MCF 10A (cell line): ENCODE measurements at regions of chr13 and their contacts with region 1.

Region 1: DNA sequence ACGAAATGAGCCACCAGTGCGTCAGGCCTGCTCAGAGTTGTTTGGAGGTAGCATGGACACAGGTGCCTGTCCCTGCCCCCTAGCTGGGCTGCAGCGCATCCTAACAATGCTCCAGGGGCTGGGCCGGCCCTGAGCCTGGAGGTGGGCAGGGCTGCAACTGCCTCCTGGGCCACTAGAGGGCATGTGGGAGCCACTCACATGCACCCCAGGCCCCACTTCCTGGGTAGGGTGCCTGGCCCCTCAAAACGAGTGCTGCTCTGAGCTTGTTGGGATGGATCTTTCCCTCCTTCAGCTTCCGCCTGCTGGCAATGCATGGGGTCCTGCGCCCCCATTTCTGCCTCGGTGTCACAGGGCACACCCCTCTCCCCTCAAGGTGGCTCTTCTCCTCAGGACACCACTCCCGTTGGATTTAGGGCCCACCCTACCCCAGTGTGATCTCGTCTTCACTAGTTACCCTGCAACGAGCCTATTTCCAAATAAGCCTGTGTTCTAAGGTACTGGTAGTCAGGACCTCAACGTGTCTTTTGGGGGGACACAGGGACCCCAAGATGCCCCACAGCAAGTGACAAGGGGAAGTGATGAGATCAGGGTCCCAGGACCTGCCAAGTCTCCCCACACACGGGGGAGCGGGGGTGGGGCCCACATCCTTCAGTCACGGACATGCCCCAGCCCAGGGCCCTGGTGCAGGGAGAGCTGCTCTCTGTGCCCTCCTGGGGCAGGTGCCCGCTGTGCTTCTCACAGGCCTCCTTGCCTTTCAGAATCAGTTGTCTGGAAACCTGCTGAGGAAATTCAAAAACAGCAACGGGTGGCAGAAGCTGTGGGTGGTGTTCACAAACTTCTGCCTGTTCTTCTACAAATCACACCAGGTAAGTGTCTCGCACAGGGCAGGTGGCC is 131.3 kb downstream of the STK24 start:
- DNase-seq: peak; percentile 75
- H3K4me3 Mint-ChIP-seq: no peak overlapping the region
- H3K27ac Mint-ChIP-seq: no peak overlapping the region
- H3K4me1 Mint-ChIP-seq: peaks cover 19% of the 10 kb centered on the region
- H3K27me3 Mint-ChIP-seq: no peaks in the 10 kb centered on the region
- CTCF ChIP-seq: peak; percentile 97

Region 2: GRCh38 chr13:98370806-98371515 is 74.6 kb before region 1 on chr13:
- CTCF ChIA-PET with region 1: no interaction called
- POLR2A ChIA-PET with region 1: no interaction called
- intact Hi-C with region 1: no loop called
- DNase-seq: no peak
- H3K4me3 Mint-ChIP-seq: no peak overlapping the region
- H3K27ac Mint-ChIP-seq: no peak overlapping the region
- H3K4me1 Mint-ChIP-seq: no peaks in the 10 kb centered on the region
- H3K27me3 Mint-ChIP-seq: no peaks in the 10 kb centered on the region
- CTCF ChIP-seq: no peak

Region 3: DNA sequence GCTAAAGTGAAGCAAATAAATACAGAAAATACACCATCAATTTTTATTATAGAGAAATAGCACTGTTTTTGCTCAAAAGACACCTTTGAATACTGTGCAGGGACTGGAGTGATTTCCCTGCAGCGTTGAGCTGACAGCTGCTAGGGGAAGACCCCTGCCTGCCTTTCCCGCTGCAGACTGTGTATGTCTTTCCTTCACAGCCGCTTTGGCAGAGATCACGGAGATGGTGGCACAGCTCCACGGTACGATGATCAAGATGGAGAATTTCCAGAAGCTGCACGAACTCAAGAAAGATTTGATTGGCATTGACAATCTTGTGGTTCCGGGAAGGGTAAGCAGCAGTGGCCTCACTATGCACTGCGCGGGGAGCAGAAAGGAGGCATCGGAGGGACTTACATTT is 10.2 kb before region 1 on chr13:
- CTCF ChIA-PET with region 1: interaction called, 11 read pairs
- POLR2A ChIA-PET with region 1: no interaction called
- intact Hi-C with region 1: no loop called
- DNase-seq: no peak
- H3K4me3 Mint-ChIP-seq: no peak overlapping the region
- H3K27ac Mint-ChIP-seq: no peak overlapping the region
- H3K4me1 Mint-ChIP-seq: no peaks in the 10 kb centered on the region
- H3K27me3 Mint-ChIP-seq: no peaks in the 10 kb centered on the region
- CTCF ChIP-seq: no peak

Region 4: GRCh38 chr13:98509271-98510155 is 63.9 kb after region 1 on chr13:
- CTCF ChIA-PET with region 1: interaction called, 15 read pairs
- POLR2A ChIA-PET with region 1: no interaction called
- intact Hi-C with region 1: no loop called
- DNase-seq: peak; percentile 87
- H3K4me3 Mint-ChIP-seq: peak overlapping the region; percentile 12
- H3K27ac Mint-ChIP-seq: peak overlapping the region; percentile 87
- H3K4me1 Mint-ChIP-seq: peaks cover 56% of the 10 kb centered on the region
- H3K27me3 Mint-ChIP-seq: no peaks in the 10 kb centered on the region
- CTCF ChIP-seq: no peak

Region 5: GRCh38 chr13:98653463-98653985 is 207.9 kb after region 1 on chr13:
- CTCF ChIA-PET with region 1: interaction called, 134 read pairs
- POLR2A ChIA-PET with region 1: interaction called, 7 read pairs
- intact Hi-C with region 1: loop called (anchors 1 kb)
- DNase-seq: peak; percentile 85
- H3K4me3 Mint-ChIP-seq: no peak overlapping the region
- H3K27ac Mint-ChIP-seq: no peak overlapping the region
- H3K4me1 Mint-ChIP-seq: peaks cover 5% of the 10 kb centered on the region
- H3K27me3 Mint-ChIP-seq: peaks cover 11% of the 10 kb centered on the region
- CTCF ChIP-seq: peak; percentile 71

Region 6: DNA sequence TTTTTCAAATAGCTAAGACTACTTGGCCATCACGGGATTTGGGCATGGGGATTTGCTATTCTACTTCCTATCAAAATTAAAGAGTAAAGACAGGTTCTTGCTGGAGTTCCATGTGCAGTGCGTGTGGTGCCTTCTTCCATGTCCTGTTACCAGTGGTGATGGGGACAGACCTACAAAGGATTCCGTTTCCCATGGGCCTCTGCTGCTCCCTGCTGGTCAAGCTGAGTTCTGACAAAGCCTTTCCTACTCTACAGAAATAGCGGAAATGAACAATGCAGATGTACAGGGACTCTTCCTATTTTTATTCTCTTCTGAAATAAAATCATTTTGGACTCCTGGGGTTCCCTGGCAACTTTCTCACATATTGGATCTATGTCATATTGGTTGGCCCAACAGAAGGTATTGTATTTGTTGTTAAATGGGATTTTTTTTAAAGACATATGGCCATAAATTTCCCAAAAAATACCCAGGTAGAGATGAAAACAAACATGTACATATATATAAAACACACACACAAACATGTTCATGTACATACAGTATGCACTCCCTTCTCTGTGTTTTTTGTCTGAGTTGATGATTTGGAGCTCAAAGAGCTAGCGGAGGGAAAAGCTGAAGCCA is 397.4 kb after region 1 on chr13:
- CTCF ChIA-PET with region 1: interaction called, 6 read pairs
- POLR2A ChIA-PET with region 1: interaction called, 3 read pairs
- intact Hi-C with region 1: loop called (anchors 10 kb)
- DNase-seq: peak; percentile 67
- H3K4me3 Mint-ChIP-seq: no peak overlapping the region
- H3K27ac Mint-ChIP-seq: no peak overlapping the region
- H3K4me1 Mint-ChIP-seq: no peaks in the 10 kb centered on the region
- H3K27me3 Mint-ChIP-seq: no peaks in the 10 kb centered on the region
- CTCF ChIP-seq: peak; percentile 83

Region 7: DNA sequence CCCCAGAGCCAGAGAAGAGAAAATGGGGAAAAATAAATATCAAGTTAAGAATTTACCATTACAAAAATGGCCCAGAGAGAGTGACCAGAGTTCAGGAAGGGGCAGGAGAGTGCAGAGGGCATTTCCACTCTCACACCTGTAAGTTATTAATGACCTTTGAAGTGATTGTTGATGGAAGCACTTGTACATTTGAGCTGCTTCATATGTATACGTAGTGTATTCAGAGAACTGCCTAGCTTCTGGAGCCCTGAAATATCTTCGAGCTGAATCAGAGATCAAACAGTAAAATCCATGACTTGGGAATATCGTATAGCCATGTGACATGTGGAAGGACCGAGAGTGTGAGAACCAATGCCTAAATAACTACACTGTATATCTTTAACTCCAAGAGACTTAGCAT is 1594.2 kb after region 1 on chr13:
- CTCF ChIA-PET with region 1: no interaction called
- POLR2A ChIA-PET with region 1: no interaction called
- intact Hi-C with region 1: no loop called
- DNase-seq: no peak
- H3K4me3 Mint-ChIP-seq: no peak overlapping the region
- H3K27ac Mint-ChIP-seq: no peak overlapping the region
- H3K4me1 Mint-ChIP-seq: no peaks in the 10 kb centered on the region
- H3K27me3 Mint-ChIP-seq: no peaks in the 10 kb centered on the region
- CTCF ChIP-seq: no peak